ENCODE measurements at regions of chr11 and their contacts with region 1.

Region 1: DNA sequence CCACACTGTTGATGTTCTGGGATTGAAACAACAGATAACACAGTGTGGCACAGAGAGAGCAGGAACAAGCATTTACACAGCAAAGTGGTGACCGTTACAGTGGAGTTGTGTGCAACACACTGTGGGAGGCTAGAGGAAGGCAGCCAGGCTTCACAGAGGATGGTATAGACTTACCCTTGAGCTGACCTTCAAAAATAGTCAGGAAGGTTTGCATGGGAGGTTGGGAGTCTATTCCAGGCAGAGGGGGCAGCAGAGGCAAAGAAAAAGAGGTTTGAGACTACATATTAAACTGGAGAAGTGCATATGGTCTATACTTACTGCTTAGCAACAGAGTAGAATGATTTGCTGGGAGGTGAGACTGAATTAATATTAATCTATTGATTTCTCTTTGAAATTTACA is 22.1 kb upstream of the FOLH1 start:
- DNase-seq: no peak
- H3K4me3 ChIP-seq: no peak overlapping the region
- H3K27ac ChIP-seq: peak overlapping the region in 4 of 59 donors; percentile 13 to 32 (median 29)
- H3K27me3 ChIP-seq: no peaks in the 10 kb centered on the region
- CTCF ChIP-seq: peak in 30 of 56 donors; percentile 11 to 55 (median 34)

Region 2: DNA sequence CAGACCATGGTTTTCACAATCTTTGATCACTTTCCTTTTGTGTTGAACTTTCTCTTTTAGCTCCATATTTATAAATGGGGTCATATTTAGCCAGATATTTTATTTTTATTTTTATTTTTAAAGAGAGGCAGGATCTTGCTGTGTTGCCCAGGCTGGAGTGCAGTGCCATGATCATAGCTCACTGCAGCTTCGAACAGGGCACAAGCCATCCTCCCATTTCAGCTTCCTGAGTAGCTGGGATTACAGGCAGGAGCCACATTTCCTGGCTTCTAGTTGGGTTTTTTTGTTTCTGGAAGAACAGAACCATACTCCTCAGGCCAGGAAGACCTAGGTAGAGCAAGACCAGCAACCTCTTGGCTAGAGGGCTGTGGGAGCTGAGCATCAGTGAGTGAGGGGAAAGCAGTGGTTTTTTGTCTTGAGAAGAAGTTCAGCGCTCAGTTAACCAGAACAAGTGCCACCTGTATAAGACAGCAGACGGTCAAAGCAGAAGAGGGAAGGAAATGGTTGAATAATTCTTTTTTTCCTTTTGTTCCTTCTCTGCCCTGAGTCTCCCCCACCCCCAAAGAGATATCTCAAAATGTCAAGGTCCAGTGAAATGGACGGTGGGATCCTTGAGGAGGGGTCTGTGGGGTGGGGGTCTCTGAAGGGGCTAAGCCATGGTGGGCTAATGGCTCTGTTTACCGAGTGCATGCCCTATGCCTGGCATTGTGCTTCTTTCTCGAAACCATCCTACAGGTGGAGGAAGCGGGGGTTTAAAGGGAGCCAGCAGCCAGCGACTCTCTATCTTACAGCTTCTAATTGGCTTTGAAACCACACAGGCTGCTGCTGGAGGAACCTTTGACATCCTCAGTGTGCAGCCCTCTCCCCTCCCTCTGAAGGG is 1187.2 kb before region 1 on chr11:
- intact Hi-C with region 1: no loop called
- DNase-seq: no peak
- H3K4me3 ChIP-seq: peak overlapping the region in 22 of 59 donors; percentile 2 to 50 (median 22)
- H3K27ac ChIP-seq: peak overlapping the region; percentile 68 to 99 (median 93)
- H3K27me3 ChIP-seq: no peaks in the 10 kb centered on the region
- CTCF ChIP-seq: no peak

Region 3: GRCh38 chr11:49424136-49424535 is 193.6 kb after region 1 on chr11:
- intact Hi-C with region 1: no loop called
- DNase-seq: no peak
- H3K4me3 ChIP-seq: peak overlapping the region in 8 of 59 donors; percentile 7 to 38 (median 27)
- H3K27ac ChIP-seq: peak overlapping the region in 22 of 59 donors; percentile 16 to 76 (median 61)
- H3K27me3 ChIP-seq: no peaks in the 10 kb centered on the region
- CTCF ChIP-seq: peak in 1 of 56 donors; percentile 17

Region 4: DNA sequence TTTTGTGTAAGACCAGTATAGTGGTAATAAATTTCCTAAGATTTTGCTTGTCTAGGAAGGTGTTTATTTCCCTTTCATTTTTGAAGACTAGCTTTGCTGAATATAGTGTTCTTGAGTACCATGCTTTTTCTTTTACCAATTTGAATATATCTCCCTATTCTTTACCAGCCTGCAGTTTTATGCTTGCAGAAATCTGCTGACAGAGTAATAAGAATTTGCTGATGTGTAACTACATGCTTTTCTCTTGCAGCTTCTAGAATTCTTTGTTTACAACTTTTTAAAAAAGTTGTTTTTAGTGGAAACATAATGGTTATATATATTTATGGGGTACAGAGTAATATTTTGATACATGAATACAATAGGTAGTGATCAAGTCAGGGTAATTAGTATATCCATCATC is 302.7 kb after region 1 on chr11:
- intact Hi-C with region 1: loop called (anchors 5 to 10 kb)
- DNase-seq: no peak
- H3K4me3 ChIP-seq: no peak overlapping the region
- H3K27ac ChIP-seq: no peak overlapping the region
- H3K27me3 ChIP-seq: no peaks in the 10 kb centered on the region
- CTCF ChIP-seq: no peak